Activated CD4-positive, alpha-beta T cell treated with anti-CD3 and anti-CD28 coated beads for 36 hours (primary cell): ENCODE measurements at regions of chr1 and their contacts with region 1.

Region 1: DNA sequence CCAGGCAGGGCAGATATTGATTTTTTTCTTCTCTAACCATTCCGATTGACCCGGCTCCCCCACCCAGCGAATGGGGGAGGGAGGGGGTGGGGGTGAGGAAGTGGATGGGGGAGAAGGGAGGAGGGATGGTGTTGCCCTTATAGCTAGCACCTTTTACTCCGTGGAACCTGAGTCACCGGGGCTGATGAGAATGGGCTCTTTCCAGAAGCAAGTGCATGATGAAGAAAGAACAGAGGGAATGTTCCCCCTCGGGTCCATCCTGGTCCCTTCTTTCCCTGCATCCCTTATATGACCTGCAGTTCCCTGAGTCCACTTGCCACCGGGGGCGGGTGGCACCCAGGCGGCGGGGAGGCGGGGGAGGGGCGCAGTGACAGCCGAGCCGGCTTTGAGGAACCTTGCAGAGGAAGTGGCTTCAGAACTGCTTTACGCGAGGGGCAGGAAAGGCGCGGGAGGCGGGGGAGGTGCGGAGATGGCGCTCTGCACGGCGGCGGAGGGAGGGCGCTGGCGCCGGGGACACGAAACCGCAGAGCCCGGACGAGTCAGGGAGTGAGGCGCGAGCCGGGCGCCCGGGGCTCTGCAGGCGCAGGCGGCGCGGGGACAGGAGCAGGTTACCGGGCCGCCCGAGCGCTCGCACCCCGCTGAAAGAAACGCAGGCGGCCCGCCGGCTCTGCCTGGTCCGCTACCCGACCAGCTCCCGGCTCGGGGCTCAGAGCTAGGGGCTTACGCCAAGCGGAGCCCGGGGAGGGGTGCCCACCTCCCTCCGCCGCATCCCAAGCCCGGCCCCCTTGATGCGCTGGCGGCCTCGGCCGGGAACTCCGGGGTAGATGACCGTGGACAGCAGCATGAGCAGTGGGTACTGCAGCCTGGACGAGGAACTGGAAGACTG is 49.7 kb downstream of the RASSF5 start:
- DNase-seq: peak; percentile 95
- ATAC-seq: peak; percentile 43
- H3K4me3 Mint-ChIP-seq: peak overlapping the region; percentile 95
- H3K27ac Mint-ChIP-seq: peak overlapping the region; percentile 99
- H3K4me1 Mint-ChIP-seq: peaks cover 66% of the 10 kb centered on the region
- H3K27me3 Mint-ChIP-seq: no peaks in the 10 kb centered on the region

Region 2: DNA sequence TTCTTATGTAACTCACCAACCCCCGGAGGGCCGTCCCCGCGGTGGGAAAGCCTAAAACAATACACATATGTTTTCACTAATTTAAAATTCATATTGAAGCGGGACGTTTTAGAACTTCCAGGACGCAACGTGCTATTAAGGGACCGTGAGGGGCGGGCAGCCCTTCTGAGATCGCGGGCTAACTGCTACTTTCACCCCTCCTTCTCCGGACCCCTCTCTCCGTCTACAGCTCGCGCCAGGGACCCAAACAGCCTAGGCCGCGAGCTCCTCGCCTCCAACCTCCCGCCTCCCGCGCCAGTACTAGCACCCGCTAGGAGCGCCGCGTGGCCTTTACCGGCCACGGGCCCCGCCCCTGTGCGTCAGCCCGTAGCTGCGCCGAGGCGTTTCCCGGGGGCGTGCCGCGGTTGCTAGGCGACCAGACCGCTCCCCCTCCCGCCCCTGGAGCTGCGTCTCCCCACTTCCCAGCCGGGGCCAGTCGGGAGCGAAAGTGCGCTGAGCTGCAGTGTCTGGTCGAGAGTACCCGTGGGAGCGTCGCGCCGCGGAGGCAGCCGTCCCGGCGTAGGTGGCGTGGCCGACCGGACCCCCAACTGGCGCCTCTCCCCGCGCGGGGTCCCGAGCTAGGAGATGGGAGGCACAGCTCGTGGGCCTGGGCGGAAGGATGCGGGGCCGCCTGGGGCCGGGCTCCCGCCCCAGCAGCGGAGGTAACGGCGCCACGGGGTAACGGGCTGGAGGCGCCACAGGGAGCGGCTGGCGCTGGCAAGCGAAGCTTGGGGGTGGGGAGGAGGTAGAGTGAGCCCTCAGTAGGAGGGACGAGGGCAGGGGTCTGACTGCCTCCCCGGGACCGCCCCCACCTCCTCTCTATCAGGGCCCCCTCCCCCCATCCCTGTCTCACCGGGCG is 78.3 kb after region 1 on chr1 and contains the start of gene DYRK3:
- CTCF ChIA-PET with region 1: interaction called, 8 read pairs
- POLR2A ChIA-PET with region 1: no interaction called
- intact Hi-C with region 1: loop called in 1 of 2 experiments (anchors 2 kb)
- DNase-seq: peak; percentile 97
- ATAC-seq: peak; percentile 93
- H3K4me3 Mint-ChIP-seq: peak within 1 kb of the TSS; percentile 76
- H3K27ac Mint-ChIP-seq: peak within 1 kb of the TSS; percentile 87
- H3K4me1 Mint-ChIP-seq: peaks cover 27% of the 10 kb centered on the region
- H3K27me3 Mint-ChIP-seq: peaks cover 7% of the 10 kb centered on the region
- total RNA-seq, gene DYRK3: 8.3 to 8.7 TPM